Activated CD8-positive, alpha-beta T cell treated with anti-CD3 and anti-CD28 coated beads for 36 hours (primary cell): ENCODE measurements at regions of chr6 and their contacts with region 1.

Region 1: GRCh38 chr6:137094411-137095008 is 49.7 kb upstream of the IL20RA start:
- DNase-seq: peak; percentile 78
- ATAC-seq: peak; percentile 79
- H3K4me3 Mint-ChIP-seq: no peak overlapping the region
- H3K27ac Mint-ChIP-seq: no peak overlapping the region
- H3K4me1 Mint-ChIP-seq: peaks cover 22% of the 10 kb centered on the region
- H3K27me3 Mint-ChIP-seq: peaks cover 3% of the 10 kb centered on the region
- CTCF ChIP-seq: peak; percentile 70

Region 2: DNA sequence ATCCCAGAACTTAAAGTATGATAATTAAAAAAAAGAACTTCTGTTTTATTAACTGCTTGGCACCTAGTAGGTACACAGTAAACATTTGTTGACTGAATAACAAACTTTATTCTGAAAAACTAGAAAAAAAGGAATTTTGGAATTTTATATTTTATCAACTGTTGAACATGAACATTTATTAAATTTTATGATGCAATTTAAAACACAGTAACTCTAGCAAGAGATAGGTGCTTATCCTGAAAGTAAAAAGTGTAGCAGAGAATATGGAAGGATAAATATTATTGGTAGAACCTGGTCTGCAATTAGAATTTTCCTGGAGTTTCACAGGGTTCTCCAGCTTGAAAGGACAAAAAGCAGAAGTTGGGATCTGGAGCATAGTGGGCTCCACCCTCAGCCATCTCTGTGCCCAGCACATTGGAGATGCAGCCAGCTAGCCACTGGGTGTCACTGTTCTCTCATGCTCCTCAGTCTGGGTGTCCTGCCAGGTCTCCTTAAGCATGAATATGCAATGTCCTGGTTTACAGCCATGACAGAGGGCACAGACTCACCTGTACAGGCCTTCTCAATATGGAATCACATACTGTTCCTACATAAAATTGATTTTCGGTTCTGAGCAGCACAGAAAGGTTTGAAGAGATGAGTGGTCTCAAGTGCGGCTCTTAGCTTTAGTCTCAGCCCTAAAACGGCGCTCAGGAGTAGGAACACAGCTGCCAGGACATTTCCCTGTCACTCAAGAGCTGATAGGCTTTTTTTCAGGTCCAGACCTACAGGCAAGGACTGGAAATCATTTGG is 18.0 kb before region 1 on chr6:
- CTCF ChIA-PET with region 1: interaction called, 12 read pairs
- POLR2A ChIA-PET with region 1: no interaction called
- intact Hi-C with region 1: no loop called
- DNase-seq: peak; percentile 70
- ATAC-seq: peak; percentile 90
- H3K4me3 Mint-ChIP-seq: no peak overlapping the region
- H3K27ac Mint-ChIP-seq: no peak overlapping the region
- H3K4me1 Mint-ChIP-seq: no peaks in the 10 kb centered on the region
- H3K27me3 Mint-ChIP-seq: peaks cover 7% of the 10 kb centered on the region
- CTCF ChIP-seq: peak; percentile 64

Region 3: GRCh38 chr6:137165375-137166246 is 71.1 kb after region 1 on chr6:
- CTCF ChIA-PET with region 1: interaction called, 28 read pairs
- POLR2A ChIA-PET with region 1: no interaction called
- intact Hi-C with region 1: no loop called
- DNase-seq: peak; percentile 67
- ATAC-seq: peak; percentile 60
- H3K4me3 Mint-ChIP-seq: no peak overlapping the region
- H3K27ac Mint-ChIP-seq: no peak overlapping the region
- H3K4me1 Mint-ChIP-seq: peaks cover 21% of the 10 kb centered on the region
- H3K27me3 Mint-ChIP-seq: peaks cover 16% of the 10 kb centered on the region
- CTCF ChIP-seq: no peak

Region 4: DNA sequence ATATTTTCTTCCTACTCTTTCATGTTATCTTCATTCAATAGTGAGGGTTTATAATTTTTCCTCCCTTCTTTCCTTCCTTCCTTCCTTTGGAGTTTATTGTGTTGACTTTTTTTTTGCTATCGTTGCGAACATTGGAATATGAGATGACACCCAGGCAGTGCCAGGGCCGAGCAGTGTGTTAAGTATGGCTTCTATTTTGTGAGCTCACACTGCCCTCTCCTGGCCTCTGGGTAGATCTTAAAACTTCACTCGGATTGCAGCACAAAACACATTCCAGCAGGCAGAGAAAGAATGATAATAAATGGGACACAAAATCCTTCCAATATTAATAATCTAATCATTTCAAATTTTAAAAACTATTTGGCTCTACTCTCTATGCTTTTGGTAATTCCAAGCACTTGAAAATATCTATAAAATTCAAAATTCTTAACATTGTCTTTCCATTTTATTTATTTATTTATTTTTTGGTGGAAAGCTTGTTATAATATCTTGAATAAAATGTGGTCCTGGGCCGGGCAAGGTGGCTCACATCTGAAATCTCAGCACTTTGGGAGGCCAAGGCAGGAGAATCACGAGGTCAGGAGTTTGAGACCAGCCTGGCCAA is 547.1 kb after region 1 on chr6:
- CTCF ChIA-PET with region 1: no interaction called
- POLR2A ChIA-PET with region 1: no interaction called
- intact Hi-C with region 1: loop called (anchors 10 kb)
- DNase-seq: peak; percentile 83
- ATAC-seq: peak; percentile 75
- H3K4me3 Mint-ChIP-seq: no peak overlapping the region
- H3K27ac Mint-ChIP-seq: no peak overlapping the region
- H3K4me1 Mint-ChIP-seq: peaks cover 15% of the 10 kb centered on the region
- H3K27me3 Mint-ChIP-seq: peaks cover 7% of the 10 kb centered on the region
- CTCF ChIP-seq: peak; percentile 90